ENCODE measurements at regions of chr22 and their contacts with region 1.

Region 1: DNA sequence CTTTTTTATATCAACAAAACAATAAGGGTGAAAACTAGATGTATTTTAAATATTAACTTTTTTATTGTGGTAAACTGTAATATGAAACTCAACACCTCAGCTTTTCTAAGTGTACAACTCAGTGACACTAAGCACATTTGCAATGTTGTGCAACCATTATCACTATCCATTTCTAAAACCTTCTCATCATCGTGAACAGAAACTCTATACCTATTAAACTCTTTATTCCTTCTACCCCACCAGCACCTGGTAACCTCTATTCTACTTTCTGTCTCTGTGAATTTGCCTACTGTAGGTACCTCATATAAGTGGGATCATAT is 9.4 kb downstream of the HORMAD2 start:
- DNase-seq: no peak
- H3K4me3 ChIP-seq: no peak overlapping the region
- H3K4me3 Mint-ChIP-seq: peak overlapping the region; percentile 3
- H3K27ac Mint-ChIP-seq: no peak overlapping the region
- H3K4me1 ChIP-seq: no peaks in the 10 kb centered on the region
- H3K4me1 Mint-ChIP-seq: no peaks in the 10 kb centered on the region
- H3K27me3 ChIP-seq: no peaks in the 10 kb centered on the region
- H3K27me3 Mint-ChIP-seq: no peaks in the 10 kb centered on the region
- CTCF ChIP-seq: no peak

Region 2: GRCh38 chr22:29635734-29636357 is 453.8 kb before region 1 on chr22:
- CTCF ChIA-PET with region 1: interaction called, 4 read pairs
- POLR2A ChIA-PET with region 1: no interaction called
- intact Hi-C with region 1: loop called (anchors 2 kb)
- DNase-seq: peak in 1 of 2 experiments; percentile 29
- H3K4me3 ChIP-seq: no peak overlapping the region
- H3K4me3 Mint-ChIP-seq: no peak overlapping the region
- H3K27ac Mint-ChIP-seq: no peak overlapping the region
- H3K4me1 ChIP-seq: peaks cover 8% of the 10 kb centered on the region
- H3K4me1 Mint-ChIP-seq: no peaks in the 10 kb centered on the region
- H3K27me3 ChIP-seq: no peaks in the 10 kb centered on the region
- H3K27me3 Mint-ChIP-seq: no peaks in the 10 kb centered on the region
- CTCF ChIP-seq: peak; percentile 64 to 69

Region 3: GRCh38 chr22:29689880-29690213 is 399.8 kb before region 1 on chr22:
- CTCF ChIA-PET with region 1: interaction called, 6 read pairs
- POLR2A ChIA-PET with region 1: no interaction called
- intact Hi-C with region 1: loop called (anchors 5 kb)
- DNase-seq: peak in 1 of 2 experiments; percentile 47
- H3K4me3 ChIP-seq: no peak overlapping the region
- H3K4me3 Mint-ChIP-seq: no peak overlapping the region
- H3K27ac Mint-ChIP-seq: no peak overlapping the region
- H3K4me1 ChIP-seq: no peaks in the 10 kb centered on the region
- H3K4me1 Mint-ChIP-seq: no peaks in the 10 kb centered on the region
- H3K27me3 ChIP-seq: no peaks in the 10 kb centered on the region
- H3K27me3 Mint-ChIP-seq: no peaks in the 10 kb centered on the region
- CTCF ChIP-seq: peak; percentile 45 to 58

Region 4: GRCh38 chr22:29701155-29701999 is 388.2 kb before region 1 on chr22:
- CTCF ChIA-PET with region 1: interaction called, 4 read pairs
- POLR2A ChIA-PET with region 1: no interaction called
- intact Hi-C with region 1: loop called (anchors 2 kb)
- DNase-seq: peak in 1 of 2 experiments; percentile 47
- H3K4me3 ChIP-seq: no peak overlapping the region
- H3K4me3 Mint-ChIP-seq: no peak overlapping the region
- H3K27ac Mint-ChIP-seq: no peak overlapping the region
- H3K4me1 ChIP-seq: peaks cover 5% of the 10 kb centered on the region
- H3K4me1 Mint-ChIP-seq: no peaks in the 10 kb centered on the region
- H3K27me3 ChIP-seq: no peaks in the 10 kb centered on the region
- H3K27me3 Mint-ChIP-seq: no peaks in the 10 kb centered on the region
- CTCF ChIP-seq: peak; percentile 28 to 41

Region 5: DNA sequence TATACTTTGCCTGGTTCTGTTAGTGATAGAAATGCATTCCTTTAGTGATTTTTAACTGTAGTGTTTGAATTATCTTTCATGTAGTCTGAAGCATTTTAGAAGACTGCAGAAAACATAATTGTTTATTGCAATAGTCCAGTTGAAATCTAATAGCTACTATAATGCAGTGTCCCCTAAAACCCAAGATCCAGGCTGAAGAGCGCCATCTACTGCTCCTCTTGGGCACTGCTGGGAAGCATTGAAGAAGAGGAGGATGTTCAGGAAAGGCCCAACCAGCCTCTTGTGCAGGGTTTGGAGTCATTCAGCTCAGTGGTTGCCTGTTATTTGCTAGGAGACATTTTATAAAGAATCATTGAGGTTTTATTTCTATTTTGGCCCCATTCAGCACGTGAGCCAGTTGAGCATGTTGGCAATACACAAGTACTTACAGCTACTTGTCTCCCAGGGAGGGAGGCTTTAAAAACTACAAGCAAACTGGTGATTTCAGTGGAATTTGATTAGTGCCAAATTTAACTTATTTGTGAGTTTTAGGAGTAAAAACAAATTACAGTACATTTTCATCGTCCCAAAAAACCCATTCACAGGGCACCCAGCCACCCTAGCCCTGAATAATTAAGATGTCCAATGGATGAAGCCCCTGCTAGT is 84.3 kb before region 1 on chr22:
- CTCF ChIA-PET with region 1: interaction called, 8 read pairs
- POLR2A ChIA-PET with region 1: no interaction called
- intact Hi-C with region 1: loop called (anchors 5 kb)
- DNase-seq: peak; percentile 49 to 73
- H3K4me3 ChIP-seq: no peak overlapping the region
- H3K4me3 Mint-ChIP-seq: no peak overlapping the region
- H3K27ac Mint-ChIP-seq: no peak overlapping the region
- H3K4me1 ChIP-seq: peaks cover 3% of the 10 kb centered on the region; the same call in 1 of the 2 replicates
- H3K4me1 Mint-ChIP-seq: no peaks in the 10 kb centered on the region
- H3K27me3 ChIP-seq: no peaks in the 10 kb centered on the region
- H3K27me3 Mint-ChIP-seq: no peaks in the 10 kb centered on the region
- CTCF ChIP-seq: peak; percentile 91 to 95

Region 6: DNA sequence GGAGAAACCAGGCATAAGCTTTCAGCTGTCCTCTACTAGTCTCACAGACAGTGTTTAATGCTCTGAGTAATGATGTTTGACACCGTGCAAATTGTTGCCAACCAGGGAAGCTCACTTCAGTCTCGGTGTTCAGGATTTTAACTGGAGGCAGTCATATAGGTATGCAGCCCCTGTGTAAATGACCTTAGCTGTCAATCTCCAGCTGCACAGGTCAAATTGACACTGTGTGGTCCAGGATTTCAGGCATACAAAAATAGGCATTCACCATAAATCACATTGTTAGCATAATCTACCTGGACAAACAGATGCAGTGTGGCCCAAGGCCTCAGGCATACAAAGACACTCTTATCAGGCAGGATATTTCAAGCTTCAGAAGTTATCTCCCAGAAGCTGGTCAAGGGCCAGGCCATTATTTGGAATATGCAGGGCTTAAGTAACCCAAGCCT is 35.0 kb before region 1 on chr22:
- CTCF ChIA-PET with region 1: interaction called, 14 read pairs
- POLR2A ChIA-PET with region 1: no interaction called
- intact Hi-C with region 1: loop called (anchors 2 kb)
- DNase-seq: peak; percentile 75 to 81
- H3K4me3 ChIP-seq: no peak overlapping the region
- H3K4me3 Mint-ChIP-seq: peak overlapping the region; percentile 35
- H3K27ac Mint-ChIP-seq: peak overlapping the region; percentile 64
- H3K4me1 ChIP-seq: peaks cover 21% of the 10 kb centered on the region
- H3K4me1 Mint-ChIP-seq: peaks cover 28% of the 10 kb centered on the region
- H3K27me3 ChIP-seq: no peaks in the 10 kb centered on the region
- H3K27me3 Mint-ChIP-seq: no peaks in the 10 kb centered on the region
- CTCF ChIP-seq: no peak